ENCODE measurements at regions of chr2 and their contacts with region 1.

Region 1: DNA sequence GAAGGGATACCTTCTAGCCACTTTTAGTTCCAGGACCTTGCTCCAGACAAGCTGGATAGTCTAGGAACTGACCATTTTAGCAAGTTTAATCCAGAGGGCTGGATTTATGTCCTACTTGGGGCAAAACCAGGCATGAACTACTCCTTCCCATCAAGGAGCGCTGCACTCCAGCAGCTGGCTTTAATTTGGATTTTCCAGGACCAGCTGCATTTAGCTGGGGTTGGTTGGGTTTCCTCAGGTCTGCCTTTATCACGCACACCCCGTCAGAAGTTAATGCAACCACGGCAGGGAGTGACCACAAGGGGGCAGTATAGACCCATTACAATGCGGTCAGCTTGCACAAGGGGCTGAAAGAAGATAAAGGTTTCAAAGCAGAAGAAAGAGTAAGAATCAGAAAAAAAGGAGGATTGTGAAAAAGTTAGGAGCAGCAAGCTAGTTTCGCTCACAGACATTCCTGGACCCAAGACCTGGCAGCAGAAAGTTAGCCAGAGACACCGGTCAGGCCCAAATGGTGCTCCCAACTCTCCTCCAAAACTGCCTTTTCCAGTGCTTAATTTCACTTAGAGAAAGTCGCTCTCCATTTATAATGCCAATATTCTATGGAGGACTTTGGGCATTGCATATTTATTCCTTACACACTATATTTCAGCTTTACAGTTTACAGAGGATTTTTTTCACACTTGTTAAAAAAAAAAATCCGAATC is 40.1 kb downstream of the SLC4A1AP start:
- DNase-seq: peak; percentile 81
- ATAC-seq: peak; percentile 40 to 74

Region 2: DNA sequence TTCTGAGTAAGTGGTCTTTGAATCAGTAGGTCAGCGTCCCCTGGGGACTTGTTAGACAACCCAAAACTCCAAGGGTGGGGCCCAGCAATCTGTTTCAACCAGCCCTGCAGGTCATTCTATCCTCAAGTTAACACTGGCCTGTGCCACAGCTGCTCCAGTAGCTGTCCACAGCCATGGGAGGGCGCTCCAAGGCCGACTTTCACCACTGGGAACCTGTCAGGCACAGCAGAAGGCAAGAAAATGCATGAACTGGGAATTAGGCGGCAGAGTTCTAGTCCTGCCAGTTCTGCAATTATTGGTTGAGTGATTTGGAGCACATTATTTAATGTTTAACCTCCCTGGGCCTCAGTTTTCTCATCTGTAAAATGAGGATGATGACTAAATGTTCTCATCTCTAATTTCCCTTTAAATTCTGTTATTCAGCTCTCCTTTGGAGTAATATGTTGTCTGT is 50.4 kb after region 1 on chr2:
- intact Hi-C with region 1: no loop called
- DNase-seq: peak; percentile 81
- ATAC-seq: peak; percentile 81 to 82

Region 3: GRCh38 chr2:27903649-27904404 is 200.0 kb after region 1 on chr2:
- intact Hi-C with region 1: loop called in 1 of 2 experiments (anchors 10 kb)
- DNase-seq: no peak
- ATAC-seq: peak in 1 of 2 donors; percentile 89

Region 4: DNA sequence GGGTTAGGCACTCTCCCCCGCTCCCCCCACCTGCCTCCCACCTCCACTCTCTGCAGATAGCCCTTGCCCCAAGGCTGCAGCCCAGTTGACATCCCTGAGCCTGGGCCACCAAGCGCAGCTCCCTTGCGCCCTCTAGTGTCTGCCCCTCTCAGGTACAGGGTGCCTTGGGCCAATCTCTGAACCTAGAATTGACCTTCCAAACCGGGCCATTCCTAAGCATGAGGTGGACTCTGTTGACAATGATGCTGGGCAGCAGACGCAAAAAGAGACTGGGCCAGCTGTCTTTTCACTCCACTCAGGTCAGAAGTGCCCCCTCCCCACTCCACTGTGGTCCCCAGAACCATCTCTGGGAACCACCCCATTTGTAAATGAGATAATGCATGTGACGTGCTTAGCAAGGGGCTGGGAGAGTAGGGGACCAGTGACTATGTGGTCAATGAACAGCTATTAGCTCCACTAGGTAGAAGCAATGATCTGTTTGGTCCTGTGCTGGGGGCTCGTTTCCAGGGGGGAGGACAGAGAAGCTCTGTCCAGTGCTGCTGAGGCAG is 748.8 kb after region 1 on chr2:
- intact Hi-C with region 1: loop called (anchors 2 to 5 kb)
- DNase-seq: peak; percentile 78
- ATAC-seq: peak; percentile 68 to 86

Measured in left cardiac atrium (tissue), 4 donors.